B cell (primary cell): ENCODE measurements at regions of chr21 and their contacts with region 1.

Region 1: GRCh38 chr21:41167348-41168342 is at the start of gene BACE2:
- DNase-seq: peak; percentile 85
- ATAC-seq: peak; percentile 87
- H3K4me3 ChIP-seq: peak within 1 kb of the TSS in 4 of 5 experiments; percentile 66 to 87 (median 75)
- H3K4me3 Mint-ChIP-seq: peak within 1 kb of the TSS; percentile 93
- H3K27ac ChIP-seq: peak within 1 kb of the TSS in 1 of 2 donors; percentile 67
- H3K27ac Mint-ChIP-seq: peak within 1 kb of the TSS; percentile 87
- H3K4me1 ChIP-seq: peaks cover 17 to 19% of the 10 kb centered on the region in 2 donors
- H3K4me1 Mint-ChIP-seq: peaks cover 26% of the 10 kb centered on the region
- H3K27me3 ChIP-seq: no peaks in the 10 kb centered on the region
- H3K27me3 Mint-ChIP-seq: peaks cover 8% of the 10 kb centered on the region
- CTCF ChIP-seq: peak; percentile 73
- total RNA-seq, gene BACE2: 14.3 and 18.4 TPM in 2 replicates

Region 2: GRCh38 chr21:40997831-40998230 is 169.8 kb before region 1 on chr21:
- CTCF ChIA-PET with region 1: no interaction called
- POLR2A ChIA-PET with region 1: no interaction called
- intact Hi-C with region 1: no loop called
- DNase-seq: no peak
- ATAC-seq: no peak
- H3K4me3 ChIP-seq: no peak overlapping the region
- H3K4me3 Mint-ChIP-seq: no peak overlapping the region
- H3K27ac ChIP-seq: no peak overlapping the region
- H3K27ac Mint-ChIP-seq: no peak overlapping the region
- H3K4me1 ChIP-seq: no peaks in the 10 kb centered on the region
- H3K4me1 Mint-ChIP-seq: no peaks in the 10 kb centered on the region
- H3K27me3 ChIP-seq: no peaks in the 10 kb centered on the region
- H3K27me3 Mint-ChIP-seq: no peaks in the 10 kb centered on the region
- CTCF ChIP-seq: no peak

Region 3: GRCh38 chr21:41156142-41156541 is 11.5 kb before region 1 on chr21:
- CTCF ChIA-PET with region 1: interaction called, 10 read pairs
- POLR2A ChIA-PET with region 1: no interaction called
- intact Hi-C with region 1: no loop called
- DNase-seq: no peak
- ATAC-seq: no peak
- H3K4me3 ChIP-seq: no peak overlapping the region
- H3K4me3 Mint-ChIP-seq: no peak overlapping the region
- H3K27ac ChIP-seq: no peak overlapping the region
- H3K27ac Mint-ChIP-seq: no peak overlapping the region
- H3K4me1 ChIP-seq: no peaks in the 10 kb centered on the region
- H3K4me1 Mint-ChIP-seq: no peaks in the 10 kb centered on the region
- H3K27me3 ChIP-seq: no peaks in the 10 kb centered on the region
- H3K27me3 Mint-ChIP-seq: peaks cover 25% of the 10 kb centered on the region
- CTCF ChIP-seq: no peak

Region 4: GRCh38 chr21:41196636-41197389 is 29.2 kb after region 1 on chr21:
- CTCF ChIA-PET with region 1: interaction called, 12 read pairs
- POLR2A ChIA-PET with region 1: no interaction called
- intact Hi-C with region 1: no loop called
- DNase-seq: no peak
- ATAC-seq: no peak
- H3K4me3 ChIP-seq: no peak overlapping the region
- H3K4me3 Mint-ChIP-seq: peak overlapping the region; percentile 41
- H3K27ac ChIP-seq: no peak overlapping the region
- H3K27ac Mint-ChIP-seq: peak overlapping the region; percentile 50
- H3K4me1 ChIP-seq: peaks cover 38 to 61% of the 10 kb centered on the region in 2 donors
- H3K4me1 Mint-ChIP-seq: peaks cover 70% of the 10 kb centered on the region
- H3K27me3 ChIP-seq: no peaks in the 10 kb centered on the region
- H3K27me3 Mint-ChIP-seq: no peaks in the 10 kb centered on the region
- CTCF ChIP-seq: no peak

Region 5: GRCh38 chr21:41215266-41216137 is 47.9 kb after region 1 on chr21:
- CTCF ChIA-PET with region 1: no interaction called
- POLR2A ChIA-PET with region 1: no interaction called
- intact Hi-C with region 1: no loop called
- DNase-seq: no peak
- ATAC-seq: no peak
- H3K4me3 ChIP-seq: no peak overlapping the region
- H3K4me3 Mint-ChIP-seq: no peak overlapping the region
- H3K27ac ChIP-seq: no peak overlapping the region
- H3K27ac Mint-ChIP-seq: no peak overlapping the region
- H3K4me1 ChIP-seq: peaks cover 4 to 7% of the 10 kb centered on the region in 2 donors
- H3K4me1 Mint-ChIP-seq: peaks cover 22% of the 10 kb centered on the region
- H3K27me3 ChIP-seq: no peaks in the 10 kb centered on the region
- H3K27me3 Mint-ChIP-seq: no peaks in the 10 kb centered on the region
- CTCF ChIP-seq: no peak

Region 6: GRCh38 chr21:41228021-41228400 is 60.4 kb after region 1 on chr21:
- CTCF ChIA-PET with region 1: interaction called, 41 read pairs
- POLR2A ChIA-PET with region 1: interaction called, 3 read pairs
- intact Hi-C with region 1: loop called (anchors 1 kb)
- DNase-seq: peak; percentile 24
- ATAC-seq: no peak
- H3K4me3 ChIP-seq: no peak overlapping the region
- H3K4me3 Mint-ChIP-seq: peak overlapping the region; percentile 84
- H3K27ac ChIP-seq: peak overlapping the region; percentile 87 to 89
- H3K27ac Mint-ChIP-seq: peak overlapping the region; percentile 87
- H3K4me1 ChIP-seq: peaks cover 43 to 54% of the 10 kb centered on the region in 2 donors
- H3K4me1 Mint-ChIP-seq: peaks cover 61% of the 10 kb centered on the region
- H3K27me3 ChIP-seq: no peaks in the 10 kb centered on the region
- H3K27me3 Mint-ChIP-seq: no peaks in the 10 kb centered on the region
- CTCF ChIP-seq: no peak

Region 7: GRCh38 chr21:41251980-41252642 is 84.5 kb after region 1 on chr21:
- CTCF ChIA-PET with region 1: no interaction called
- POLR2A ChIA-PET with region 1: no interaction called
- intact Hi-C with region 1: no loop called
- DNase-seq: no peak
- ATAC-seq: no peak
- H3K4me3 ChIP-seq: no peak overlapping the region
- H3K4me3 Mint-ChIP-seq: no peak overlapping the region
- H3K27ac ChIP-seq: no peak overlapping the region
- H3K27ac Mint-ChIP-seq: no peak overlapping the region
- H3K4me1 ChIP-seq: peaks cover 0 to 14% of the 10 kb centered on the region in 2 donors
- H3K4me1 Mint-ChIP-seq: peaks cover 11% of the 10 kb centered on the region
- H3K27me3 ChIP-seq: no peaks in the 10 kb centered on the region
- H3K27me3 Mint-ChIP-seq: no peaks in the 10 kb centered on the region
- CTCF ChIP-seq: no peak

Region 8: GRCh38 chr21:41345934-41346685 is 178.5 kb after region 1 on chr21:
- CTCF ChIA-PET with region 1: no interaction called
- POLR2A ChIA-PET with region 1: no interaction called
- intact Hi-C with region 1: no loop called
- DNase-seq: no peak
- ATAC-seq: no peak
- H3K4me3 ChIP-seq: no peak overlapping the region
- H3K4me3 Mint-ChIP-seq: no peak overlapping the region
- H3K27ac ChIP-seq: no peak overlapping the region
- H3K27ac Mint-ChIP-seq: no peak overlapping the region
- H3K4me1 ChIP-seq: no peaks in the 10 kb centered on the region
- H3K4me1 Mint-ChIP-seq: no peaks in the 10 kb centered on the region
- H3K27me3 ChIP-seq: peaks cover 0 to 9% (median 0%) of the 10 kb centered on the region in 4 experiments
- H3K27me3 Mint-ChIP-seq: peaks cover 18% of the 10 kb centered on the region
- CTCF ChIP-seq: no peak

Region 9: DNA sequence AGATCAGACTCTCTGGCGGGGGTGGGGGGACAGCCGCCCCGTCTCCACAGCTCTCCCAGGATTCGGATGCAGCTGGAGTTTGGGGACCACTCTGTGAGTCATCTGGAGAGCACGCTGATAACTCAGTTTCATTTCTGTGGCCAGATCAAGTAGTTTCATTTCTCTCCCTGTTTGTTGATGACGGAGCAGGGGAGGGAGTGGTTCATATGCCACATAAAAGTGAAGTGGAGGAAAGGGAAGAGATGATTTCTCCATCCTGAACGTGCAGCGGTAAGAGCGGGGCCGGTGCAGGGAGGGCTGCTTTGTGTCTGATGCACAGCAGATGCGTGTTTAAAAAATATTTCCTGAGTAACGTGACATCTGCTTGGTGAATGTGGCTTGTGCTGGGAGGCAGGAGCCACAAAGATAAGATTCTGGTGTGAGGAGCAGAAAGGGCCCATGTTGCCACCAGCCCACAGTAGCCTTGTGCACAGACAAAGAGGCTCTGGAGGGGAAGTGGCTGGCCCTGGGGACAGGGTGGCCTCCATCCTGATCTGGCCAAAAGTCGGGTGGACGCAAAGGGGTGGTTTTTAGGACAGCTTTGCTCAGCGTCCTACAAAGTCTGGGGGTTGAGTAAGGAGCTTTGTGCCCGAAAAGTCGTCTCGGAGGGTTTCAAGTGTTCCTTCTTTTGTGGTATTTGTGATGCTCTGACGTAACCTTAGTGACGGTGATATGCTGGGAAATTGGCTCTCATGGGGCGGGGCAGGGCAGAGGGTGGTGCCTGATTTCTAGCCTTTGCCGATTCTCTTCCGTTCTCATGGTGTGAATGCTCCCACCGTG is 194.3 kb after region 1 on chr21 and contains the start of gene MX2:
- CTCF ChIA-PET with region 1: interaction called, 4 read pairs
- POLR2A ChIA-PET with region 1: no interaction called
- intact Hi-C with region 1: loop called (anchors 5 kb)
- DNase-seq: peak; percentile 90
- ATAC-seq: peak; percentile 81
- H3K4me3 ChIP-seq: peak within 1 kb of the TSS; percentile 60 to 79 (median 69)
- H3K4me3 Mint-ChIP-seq: peak within 1 kb of the TSS; percentile 83
- H3K27ac ChIP-seq: peak within 1 kb of the TSS; percentile 94 to 98
- H3K27ac Mint-ChIP-seq: peak within 1 kb of the TSS; percentile 99
- H3K4me1 ChIP-seq: peaks cover 42 to 59% of the 10 kb centered on the region in 2 donors
- H3K4me1 Mint-ChIP-seq: peaks cover 57% of the 10 kb centered on the region
- H3K27me3 ChIP-seq: no peaks in the 10 kb centered on the region
- H3K27me3 Mint-ChIP-seq: no peaks in the 10 kb centered on the region
- CTCF ChIP-seq: no peak
- total RNA-seq, gene MX2: 64.3 and 72.8 TPM in 2 replicates

Region 10: GRCh38 chr21:41425954-41426675 is 258.5 kb after region 1 on chr21 and contains the start of gene MX1:
- CTCF ChIA-PET with region 1: no interaction called
- POLR2A ChIA-PET with region 1: no interaction called
- intact Hi-C with region 1: loop called (anchors 1 kb)
- DNase-seq: peak; percentile 82
- ATAC-seq: peak; percentile 95
- H3K4me3 ChIP-seq: peak within 1 kb of the TSS; percentile 57 to 93 (median 74)
- H3K4me3 Mint-ChIP-seq: peak within 1 kb of the TSS; percentile 99
- H3K27ac ChIP-seq: peak within 1 kb of the TSS; percentile 69 to 83
- H3K27ac Mint-ChIP-seq: peak within 1 kb of the TSS; percentile 98
- H3K4me1 ChIP-seq: peaks cover 55 to 71% of the 10 kb centered on the region in 2 donors
- H3K4me1 Mint-ChIP-seq: peaks cover 75% of the 10 kb centered on the region
- H3K27me3 ChIP-seq: no peaks in the 10 kb centered on the region
- H3K27me3 Mint-ChIP-seq: no peaks in the 10 kb centered on the region
- CTCF ChIP-seq: no peak
- total RNA-seq, gene MX1: 61.8 and 62.9 TPM in 2 replicates